Mammary epithelial cell (primary cell): ENCODE measurements at regions of chr4 and their contacts with region 1.

Region 1: DNA sequence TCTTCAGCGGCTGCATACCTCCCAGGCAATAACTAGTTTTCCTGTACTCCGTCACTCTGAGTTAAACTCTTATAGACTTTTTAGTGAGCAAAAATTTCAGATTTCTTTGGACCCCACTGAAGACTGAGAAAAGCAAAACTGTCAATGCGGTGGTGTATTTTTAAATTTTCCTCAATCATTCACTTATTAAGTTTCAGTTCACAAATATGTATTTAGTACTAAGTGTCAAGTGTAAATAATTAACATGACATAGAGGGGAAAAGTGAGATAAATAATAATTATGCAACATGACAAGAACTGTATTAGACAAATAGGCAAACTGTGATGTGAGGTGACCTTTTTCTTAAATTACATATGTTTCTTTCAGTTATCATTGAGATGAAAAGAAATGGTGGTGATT is 124.4 kb downstream of the NAF1 start:
- DNase-seq: no peak
- H3K4me3 ChIP-seq: no peak overlapping the region
- H3K27ac ChIP-seq: no peak overlapping the region
- H3K4me1 ChIP-seq: no peaks in the 10 kb centered on the region
- H3K27me3 ChIP-seq: peaks cover 3% of the 10 kb centered on the region
- CTCF ChIP-seq: no peak

Region 2: GRCh38 chr4:162497564-162498167 is 544.6 kb before region 1 on chr4:
- CTCF ChIA-PET with region 1: no interaction called
- dilution Hi-C with region 1: no loop called
- in situ Hi-C with region 1: loop called (anchors 10 kb)
- intact Hi-C with region 1: loop called (anchors 1 kb)
- DNase-seq: peak; percentile 25
- H3K4me3 ChIP-seq: no peak overlapping the region
- H3K27ac ChIP-seq: no peak overlapping the region
- H3K4me1 ChIP-seq: no peaks in the 10 kb centered on the region
- H3K27me3 ChIP-seq: no peaks in the 10 kb centered on the region
- CTCF ChIP-seq: peak; percentile 46 to 82

Region 3: DNA sequence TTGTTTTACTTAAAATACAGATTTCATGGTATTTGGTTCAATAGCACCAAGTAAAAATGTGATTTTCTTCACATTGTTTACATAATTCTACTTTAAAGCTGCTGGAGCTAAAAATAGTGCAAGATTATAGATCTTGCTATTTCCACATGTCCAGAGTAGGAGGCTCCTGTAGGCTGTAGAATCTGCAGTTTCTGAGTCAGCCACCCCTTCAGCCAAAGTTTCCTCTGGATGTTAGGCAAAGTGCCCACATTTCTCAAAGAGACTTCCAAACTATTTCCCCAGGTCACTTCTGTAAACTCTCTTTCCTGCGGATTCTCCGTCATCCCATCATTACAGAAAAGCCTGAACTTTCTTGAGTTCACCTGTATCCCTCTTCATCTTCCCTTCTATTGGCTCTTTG is 536.1 kb before region 1 on chr4:
- CTCF ChIA-PET with region 1: no interaction called
- dilution Hi-C with region 1: no loop called
- in situ Hi-C with region 1: loop called (anchors 10 kb)
- intact Hi-C with region 1: no loop called
- DNase-seq: no peak
- H3K4me3 ChIP-seq: no peak overlapping the region
- H3K27ac ChIP-seq: no peak overlapping the region
- H3K4me1 ChIP-seq: no peaks in the 10 kb centered on the region
- H3K27me3 ChIP-seq: no peaks in the 10 kb centered on the region
- CTCF ChIP-seq: no peak

Region 4: GRCh38 chr4:162645381-162645780 is 396.9 kb before region 1 on chr4:
- CTCF ChIA-PET with region 1: no interaction called
- dilution Hi-C with region 1: no loop called
- in situ Hi-C with region 1: no loop called
- intact Hi-C with region 1: loop called (anchors 1 kb)
- DNase-seq: no peak
- H3K4me3 ChIP-seq: no peak overlapping the region
- H3K27ac ChIP-seq: no peak overlapping the region
- H3K4me1 ChIP-seq: peaks cover 7% of the 10 kb centered on the region
- H3K27me3 ChIP-seq: no peaks in the 10 kb centered on the region
- CTCF ChIP-seq: peak in 1 of 2 donors; percentile 35

Region 5: GRCh38 chr4:163295138-163295537 is 252.8 kb after region 1 on chr4:
- CTCF ChIA-PET with region 1: no interaction called
- dilution Hi-C with region 1: no loop called
- in situ Hi-C with region 1: no loop called
- intact Hi-C with region 1: no loop called
- DNase-seq: no peak
- H3K4me3 ChIP-seq: no peak overlapping the region
- H3K27ac ChIP-seq: no peak overlapping the region
- H3K4me1 ChIP-seq: no peaks in the 10 kb centered on the region
- H3K27me3 ChIP-seq: no peaks in the 10 kb centered on the region
- CTCF ChIP-seq: no peak

Region 6: GRCh38 chr4:163651761-163652160 is 609.5 kb after region 1 on chr4:
- CTCF ChIA-PET with region 1: interaction called, 27 read pairs
- dilution Hi-C with region 1: no loop called
- in situ Hi-C with region 1: no loop called
- intact Hi-C with region 1: no loop called
- DNase-seq: no peak
- H3K4me3 ChIP-seq: no peak overlapping the region
- H3K27ac ChIP-seq: no peak overlapping the region
- H3K4me1 ChIP-seq: no peaks in the 10 kb centered on the region
- H3K27me3 ChIP-seq: no peaks in the 10 kb centered on the region
- CTCF ChIP-seq: no peak